Activated CD8-positive, alpha-beta memory T cell treated with anti-CD3 and anti-CD28 coated beads, Interleukin-2, amount 10 ng/mL, durations not matched to agents 7 days and 5 days (primary cell): ENCODE measurements at regions of chr11 and their contacts with region 1.

Region 1: GRCh38 chr11:9137293-9138132 is 46.1 kb upstream of the SCUBE2 start:
- DNase-seq: peak; percentile 76
- ATAC-seq: peak; percentile 97
- H3K4me3 Mint-ChIP-seq: no peak overlapping the region
- H3K27ac Mint-ChIP-seq: peak overlapping the region; percentile 20
- H3K4me1 Mint-ChIP-seq: peaks cover 21% of the 10 kb centered on the region
- H3K27me3 Mint-ChIP-seq: no peaks in the 10 kb centered on the region

Region 2: GRCh38 chr11:8717876-8718753 is 419.4 kb before region 1 on chr11:
- CTCF ChIA-PET with region 1: no interaction called
- DNase-seq: no peak
- ATAC-seq: no peak
- H3K4me3 Mint-ChIP-seq: no peak overlapping the region
- H3K27ac Mint-ChIP-seq: no peak overlapping the region
- H3K4me1 Mint-ChIP-seq: peaks cover 7% of the 10 kb centered on the region
- H3K27me3 Mint-ChIP-seq: peaks cover 3% of the 10 kb centered on the region

Region 3: DNA sequence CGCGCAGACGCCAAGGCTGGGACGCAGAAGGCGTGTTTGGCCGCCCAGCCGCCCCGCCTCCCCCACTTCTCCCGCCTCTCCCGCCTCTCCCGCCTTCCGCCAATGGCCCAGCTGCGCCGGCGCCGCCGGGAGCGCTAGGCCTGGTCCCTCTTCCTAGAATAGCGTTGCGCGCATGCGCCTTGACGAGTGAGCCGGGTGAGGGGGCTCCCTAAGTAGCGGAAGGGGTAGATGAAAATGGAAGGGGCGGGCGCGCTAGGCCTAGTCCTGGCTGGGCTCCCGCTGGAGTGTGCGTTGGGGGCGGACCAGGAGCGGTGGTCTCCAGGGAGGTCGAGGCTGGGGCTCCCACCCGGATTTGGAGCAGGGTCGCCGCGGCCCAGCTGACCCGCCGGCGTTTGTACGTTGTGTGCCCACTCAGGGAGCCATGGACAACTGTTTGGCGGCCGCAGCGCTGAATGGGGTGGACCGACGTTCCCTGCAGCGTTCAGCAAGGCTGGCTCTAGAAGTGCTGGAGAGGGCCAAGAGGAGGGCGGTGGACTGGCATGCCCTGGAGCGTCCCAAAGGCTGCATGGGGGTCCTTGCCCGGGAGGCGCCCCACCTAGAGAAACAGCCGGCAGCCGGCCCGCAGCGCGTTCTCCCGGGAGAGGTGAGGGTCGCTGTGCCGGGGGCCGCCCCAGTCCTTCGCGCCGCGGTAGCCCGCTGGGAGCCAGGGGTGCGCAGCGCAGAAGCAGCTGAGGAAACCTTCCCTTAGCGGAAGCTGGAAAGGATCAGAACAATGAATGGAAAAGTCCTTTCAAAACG is 226.3 kb before region 1 on chr11 and contains the start of gene AKIP1:
- CTCF ChIA-PET with region 1: interaction called, 29 read pairs
- DNase-seq: peak; percentile 89
- ATAC-seq: peak; percentile 85
- H3K4me3 Mint-ChIP-seq: peak within 1 kb of the TSS; percentile 86
- H3K27ac Mint-ChIP-seq: peak within 1 kb of the TSS; percentile 78
- H3K4me1 Mint-ChIP-seq: peaks cover 52% of the 10 kb centered on the region
- H3K27me3 Mint-ChIP-seq: peaks cover 4% of the 10 kb centered on the region
- total RNA-seq, gene AKIP1: 29.8 to 34.9 TPM

Region 4: DNA sequence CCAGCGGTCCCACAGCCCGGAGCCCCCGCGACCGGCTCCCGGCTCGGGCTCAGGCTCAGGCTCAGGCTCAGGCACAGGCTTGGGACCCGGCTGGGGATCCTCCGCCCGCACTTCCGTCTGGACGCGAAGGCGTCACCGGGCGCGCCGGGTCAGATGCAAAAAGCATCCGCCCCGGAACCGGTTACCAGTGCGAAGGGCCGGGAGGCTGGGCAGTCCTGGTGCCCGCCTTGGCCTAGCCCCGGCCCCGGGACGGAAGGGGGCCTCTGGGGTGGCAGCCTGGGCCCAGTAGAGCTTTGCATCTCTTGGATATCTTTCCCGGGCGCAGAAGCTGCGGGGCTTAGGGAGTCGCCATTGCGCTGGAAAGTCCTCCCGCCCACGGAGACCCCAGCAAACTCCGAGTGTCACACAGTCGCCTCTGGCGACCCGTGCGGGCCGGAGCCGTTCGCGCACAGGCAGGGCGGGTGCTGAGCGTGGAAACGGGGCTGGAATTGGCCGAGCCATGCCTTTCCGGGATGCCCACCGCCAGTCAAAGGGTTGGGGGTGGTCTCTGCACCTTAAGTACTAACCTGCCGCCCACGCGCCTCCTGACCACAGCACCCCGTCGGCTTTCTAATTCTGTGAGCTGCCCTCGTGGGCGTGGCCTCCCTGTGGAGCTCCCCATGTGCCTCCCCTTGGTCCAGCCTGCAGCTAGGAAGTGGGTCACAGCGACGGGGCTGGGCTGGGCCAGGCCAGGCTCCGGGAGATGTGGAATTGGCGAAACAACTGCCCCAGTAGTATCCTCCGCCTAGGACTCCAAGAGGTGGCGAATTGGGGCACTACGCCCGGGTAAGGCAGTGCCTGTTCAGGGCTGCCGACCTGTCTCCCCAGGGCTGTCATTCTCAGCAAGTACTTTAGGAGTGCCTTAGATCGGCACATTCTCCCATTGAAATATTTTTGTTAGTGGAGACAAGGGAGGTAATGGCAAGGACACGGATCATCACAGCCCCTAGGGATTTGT is 172.9 kb before region 1 on chr11 and contains the start of gene TMEM9B:
- CTCF ChIA-PET with region 1: interaction called, 11 read pairs
- DNase-seq: peak; percentile 92
- ATAC-seq: peak; percentile 89
- H3K4me3 Mint-ChIP-seq: peak within 1 kb of the TSS; percentile 98
- H3K27ac Mint-ChIP-seq: peak within 1 kb of the TSS; percentile 97
- H3K4me1 Mint-ChIP-seq: peaks cover 32% of the 10 kb centered on the region
- H3K27me3 Mint-ChIP-seq: no peaks in the 10 kb centered on the region
- total RNA-seq, gene TMEM9B: 22.9 to 30.1 TPM

Region 5: GRCh38 chr11:9015677-9016076 is 121.8 kb before region 1 on chr11:
- CTCF ChIA-PET with region 1: interaction called, 79 read pairs
- DNase-seq: peak; percentile 73
- ATAC-seq: peak; percentile 87
- H3K4me3 Mint-ChIP-seq: no peak overlapping the region
- H3K27ac Mint-ChIP-seq: no peak overlapping the region
- H3K4me1 Mint-ChIP-seq: peaks cover 18% of the 10 kb centered on the region
- H3K27me3 Mint-ChIP-seq: peaks cover 19% of the 10 kb centered on the region

Region 6: GRCh38 chr11:9092853-9093778 is 44.4 kb before region 1 on chr11:
- CTCF ChIA-PET with region 1: interaction called, 10 read pairs
- DNase-seq: no peak
- ATAC-seq: no peak
- H3K4me3 Mint-ChIP-seq: no peak overlapping the region
- H3K27ac Mint-ChIP-seq: no peak overlapping the region
- H3K4me1 Mint-ChIP-seq: no peaks in the 10 kb centered on the region
- H3K27me3 Mint-ChIP-seq: peaks cover 60% of the 10 kb centered on the region

Region 7: DNA sequence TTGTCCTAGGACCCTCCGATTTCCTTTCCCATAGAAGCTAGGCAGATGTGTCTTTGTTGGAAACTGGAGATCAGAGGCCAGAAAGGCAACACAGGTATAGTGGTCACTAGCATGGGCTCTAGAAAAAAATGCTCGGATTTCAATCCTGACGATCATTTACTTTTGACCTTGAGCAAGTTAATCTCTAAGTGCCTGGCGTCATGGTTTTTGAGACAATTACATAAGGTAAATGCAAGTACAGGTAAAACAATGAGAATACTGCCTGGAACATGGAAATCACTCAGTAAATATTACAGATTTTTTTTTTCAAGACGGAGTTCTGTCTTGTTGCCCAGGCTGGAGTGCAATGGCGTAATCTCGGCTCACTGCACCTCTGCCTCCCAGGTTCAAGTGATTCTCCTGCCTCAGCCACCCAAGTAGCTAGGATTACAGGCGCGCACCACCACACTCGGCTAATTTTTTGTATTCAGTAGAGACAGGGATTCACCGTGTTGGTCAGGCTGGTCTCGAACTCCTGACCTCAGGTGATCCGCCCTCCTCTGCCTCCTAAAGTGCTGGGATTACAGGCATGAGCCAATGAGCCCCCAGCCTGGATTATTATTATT is 128.7 kb after region 1 on chr11:
- CTCF ChIA-PET with region 1: no interaction called
- DNase-seq: no peak
- ATAC-seq: no peak
- H3K4me3 Mint-ChIP-seq: peak overlapping the region; percentile 58
- H3K27ac Mint-ChIP-seq: no peak overlapping the region
- H3K4me1 Mint-ChIP-seq: peaks cover 21% of the 10 kb centered on the region
- H3K27me3 Mint-ChIP-seq: peaks cover 58% of the 10 kb centered on the region